GM12878 (cell line): ENCODE measurements at regions of chr12 and their contacts with region 1.

Region 1: DNA sequence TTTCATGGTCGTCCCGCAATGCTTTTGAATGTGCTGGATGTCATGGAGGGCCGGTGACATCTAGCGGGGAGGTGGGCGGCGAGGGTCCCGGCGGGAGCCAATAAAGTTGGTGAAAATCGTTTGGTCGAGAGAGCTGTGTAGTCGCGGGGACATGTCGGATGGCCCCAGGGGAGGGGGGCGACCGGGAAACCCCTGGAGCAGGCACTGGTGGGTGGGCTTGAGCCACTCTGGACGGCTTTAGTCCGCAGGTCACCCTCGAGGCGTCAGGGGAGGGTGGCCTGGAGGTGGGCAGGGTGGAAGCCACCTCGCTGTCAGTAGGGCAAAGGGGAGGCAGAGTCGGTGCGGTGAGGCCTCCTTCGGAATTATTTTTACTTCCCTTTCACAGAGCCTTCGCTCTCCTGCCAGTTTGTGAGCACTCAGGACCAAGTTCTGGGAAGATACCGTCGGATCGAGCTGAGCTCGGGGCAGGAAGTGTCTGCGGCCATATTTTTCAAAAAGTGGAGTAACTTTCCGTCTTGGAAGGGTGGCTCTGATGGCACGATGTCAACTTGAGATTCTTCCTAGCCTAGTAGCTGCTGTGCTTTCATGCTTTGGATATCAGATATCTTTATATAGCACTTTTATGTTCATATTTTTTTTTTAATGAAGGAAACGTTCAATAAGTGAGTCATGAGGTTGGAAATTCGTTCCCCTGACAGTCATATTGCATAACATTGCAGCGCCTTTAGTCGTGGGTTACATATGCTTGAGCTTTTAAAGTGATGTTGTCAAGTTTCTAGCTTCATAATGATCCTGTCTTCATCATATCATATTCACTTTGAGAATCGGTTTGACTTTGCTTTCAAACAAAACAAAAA is 28.1 kb downstream of the WBP11 start:
- DNase-seq: no peak
- ATAC-seq: no peak
- H3K4me3 ChIP-seq: peak overlapping the region; percentile 86
- H3K27ac ChIP-seq: peak overlapping the region; percentile 84
- H3K4me1 ChIP-seq: peaks cover 5% of the 10 kb centered on the region
- H3K27me3 ChIP-seq: no peaks in the 10 kb centered on the region
- CTCF ChIP-seq: 0 out of 6 replicates have a peak, but pooled peaks of 1 of the 3 experiments have one; percentile 3
- EP300 ChIP-seq: no peak
- POLR2A ChIP-seq: peak; percentile 60
- RAD21 ChIP-seq: peak; percentile 23; the same call in 1 of the 2 replicates

Region 2: GRCh38 chr12:14858513-14858912 is 83.4 kb after region 1 on chr12:
- CTCF ChIA-PET with region 1: no interaction called
- POLR2A ChIA-PET with region 1: no interaction called
- RAD21 ChIA-PET with region 1: no interaction called
- SMC1A ChIA-PET with region 1: no interaction called
- in situ Hi-C with region 1: no loop called
- intact Hi-C with region 1: no loop called
- DNase-seq: no peak
- ATAC-seq: no peak
- H3K4me3 ChIP-seq: no peak overlapping the region
- H3K27ac ChIP-seq: no peak overlapping the region
- H3K4me1 ChIP-seq: no peaks in the 10 kb centered on the region
- H3K27me3 ChIP-seq: no peaks in the 10 kb centered on the region
- CTCF ChIP-seq: no peak
- EP300 ChIP-seq: no peak
- POLR2A ChIP-seq: no peak
- RAD21 ChIP-seq: no peak

Region 3: GRCh38 chr12:15356951-15357364 is 581.8 kb after region 1 on chr12:
- CTCF ChIA-PET with region 1: no interaction called
- POLR2A ChIA-PET with region 1: no interaction called
- RAD21 ChIA-PET with region 1: no interaction called
- SMC1A ChIA-PET with region 1: no interaction called
- in situ Hi-C with region 1: no loop called
- intact Hi-C with region 1: no loop called
- DNase-seq: no peak
- ATAC-seq: no peak
- H3K4me3 ChIP-seq: no peak overlapping the region
- H3K27ac ChIP-seq: no peak overlapping the region
- H3K4me1 ChIP-seq: no peaks in the 10 kb centered on the region
- H3K27me3 ChIP-seq: no peaks in the 10 kb centered on the region; a peak in 1 of 4 replicates
- CTCF ChIP-seq: no peak
- EP300 ChIP-seq: no peak
- POLR2A ChIP-seq: no peak
- RAD21 ChIP-seq: no peak

Region 4: GRCh38 chr12:15882118-15882971 is 1107.2 kb after region 1 on chr12 and contains the start of gene STRAP:
- CTCF ChIA-PET with region 1: no interaction called
- POLR2A ChIA-PET with region 1: no interaction called
- RAD21 ChIA-PET with region 1: no interaction called
- SMC1A ChIA-PET with region 1: no interaction called
- in situ Hi-C with region 1: loop called (anchors 25 kb)
- intact Hi-C with region 1: loop called (anchors 5 kb)
- DNase-seq: peak; percentile 88
- ATAC-seq: peak; percentile 93
- H3K4me3 ChIP-seq: peak within 1 kb of the TSS; percentile 97
- H3K27ac ChIP-seq: peak within 1 kb of the TSS; percentile 90
- H3K4me1 ChIP-seq: peaks cover 4% of the 10 kb centered on the region; the same call in 1 of the 2 replicates
- H3K27me3 ChIP-seq: no peaks in the 10 kb centered on the region
- CTCF ChIP-seq: no peak
- EP300 ChIP-seq: no peak
- POLR2A ChIP-seq: peak; percentile 94
- RAD21 ChIP-seq: no peak
- polyA plus RNA-seq, gene STRAP: 102 to 227 TPM